Activated CD4-positive, alpha-beta memory T cell treated with anti-CD3 and anti-CD28 coated beads, Interleukin-2, amount 10 ng/mL, durations not matched to agents 7 days and 5 days (primary cell): ENCODE measurements at regions of chr6 and their contacts with region 1.

Region 1: GRCh38 chr6:150417899-150418826 is 49.4 kb downstream of the IYD start:
- DNase-seq: peak; percentile 48
- H3K4me3 Mint-ChIP-seq: peak overlapping the region; percentile 64
- H3K27ac Mint-ChIP-seq: peak overlapping the region; percentile 70
- H3K4me1 Mint-ChIP-seq: peaks cover 31% of the 10 kb centered on the region
- H3K27me3 Mint-ChIP-seq: peaks cover 28% of the 10 kb centered on the region

Region 2: GRCh38 chr6:150600301-150601017 is 182.3 kb after region 1 on chr6:
- CTCF ChIA-PET with region 1: interaction called, 13 read pairs
- POLR2A ChIA-PET with region 1: interaction called, 8 read pairs
- DNase-seq: peak; percentile 65
- H3K4me3 Mint-ChIP-seq: peak overlapping the region; percentile 80
- H3K27ac Mint-ChIP-seq: peak overlapping the region; percentile 40
- H3K4me1 Mint-ChIP-seq: peaks cover 16% of the 10 kb centered on the region
- H3K27me3 Mint-ChIP-seq: peaks cover 51% of the 10 kb centered on the region

Region 3: DNA sequence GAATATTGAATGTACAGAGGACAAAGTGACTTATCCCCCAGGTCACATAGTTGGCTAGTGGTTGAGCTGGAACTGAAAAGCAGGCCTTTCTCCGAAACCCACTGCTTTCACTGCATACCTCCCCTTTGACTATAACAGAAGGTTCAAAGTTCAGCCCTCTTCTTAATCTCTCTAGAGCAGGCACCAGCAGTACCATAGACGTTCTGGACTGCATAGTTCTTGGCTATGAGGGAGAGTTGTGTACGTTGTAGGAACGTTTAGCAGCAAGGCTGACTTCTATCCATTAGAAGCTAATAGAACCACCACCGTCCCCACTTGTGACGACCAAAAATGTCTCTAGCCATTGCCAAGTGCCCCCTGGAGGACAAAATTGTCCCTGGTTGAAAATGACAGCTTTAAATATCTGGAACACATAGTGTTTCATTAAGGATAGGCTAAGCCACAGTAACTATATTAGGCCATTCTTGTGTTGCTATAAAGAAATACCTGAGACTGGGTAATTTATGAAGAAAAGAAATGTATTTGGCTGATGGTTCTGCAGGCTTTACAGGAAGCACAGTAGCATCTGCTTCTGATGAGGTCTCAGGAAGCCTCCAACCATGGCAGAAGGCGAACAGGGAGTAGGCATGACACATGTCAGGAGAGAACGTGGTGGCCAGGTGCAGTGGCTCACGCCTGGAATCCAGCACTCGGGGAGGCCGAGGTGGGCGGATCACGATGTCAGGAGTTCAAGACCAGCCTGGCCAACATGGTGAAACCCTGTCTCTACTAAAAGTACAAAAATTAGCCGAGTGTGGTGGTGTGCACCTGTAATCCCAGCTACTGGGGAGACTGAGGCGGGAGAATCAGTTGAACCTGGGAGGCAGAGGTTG is 323.7 kb after region 1 on chr6:
- CTCF ChIA-PET with region 1: interaction called, 11 read pairs
- POLR2A ChIA-PET with region 1: no interaction called
- DNase-seq: no peak
- H3K4me3 Mint-ChIP-seq: no peak overlapping the region
- H3K27ac Mint-ChIP-seq: no peak overlapping the region
- H3K4me1 Mint-ChIP-seq: no peaks in the 10 kb centered on the region
- H3K27me3 Mint-ChIP-seq: peaks cover 11% of the 10 kb centered on the region

Region 4: DNA sequence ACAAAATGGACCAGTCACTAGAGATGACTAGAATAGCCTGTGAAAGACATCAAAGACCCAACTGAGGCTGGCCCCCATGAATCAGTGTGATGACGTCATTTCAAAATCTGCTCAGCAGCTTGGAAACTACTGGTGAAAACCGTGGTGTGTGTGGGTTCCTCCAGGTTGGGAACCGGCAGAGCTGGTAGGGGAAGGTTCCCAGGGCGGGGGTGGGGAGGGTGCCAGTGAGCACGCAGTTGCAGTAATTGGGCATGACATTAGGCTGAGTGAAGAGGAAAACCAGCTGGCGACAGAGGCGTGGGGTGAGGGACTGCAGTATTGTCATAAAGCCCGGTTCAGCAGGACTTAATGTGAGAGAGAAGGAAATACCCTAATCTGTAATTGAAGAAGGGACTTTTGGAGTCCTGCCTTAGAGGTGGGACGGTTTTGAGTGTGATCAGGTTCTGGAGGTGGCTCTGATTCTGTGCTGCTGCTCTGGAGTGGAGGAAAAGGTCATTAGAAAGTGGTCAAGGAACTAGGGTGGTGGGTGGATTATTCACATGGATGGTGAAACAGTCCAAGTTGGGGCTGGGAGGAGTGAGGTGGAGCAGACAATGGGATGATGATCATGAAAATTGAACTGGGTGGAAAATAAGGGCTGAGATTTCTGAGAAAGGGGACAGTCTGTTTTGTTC is 395.3 kb after region 1 on chr6:
- CTCF ChIA-PET with region 1: interaction called, 106 read pairs
- POLR2A ChIA-PET with region 1: no interaction called
- DNase-seq: peak; percentile 21
- H3K4me3 Mint-ChIP-seq: no peak overlapping the region
- H3K27ac Mint-ChIP-seq: peak overlapping the region; percentile 70
- H3K4me1 Mint-ChIP-seq: peaks cover 23% of the 10 kb centered on the region
- H3K27me3 Mint-ChIP-seq: peaks cover 6% of the 10 kb centered on the region